A673 (cell line): ENCODE measurements at regions of chr12 and their contacts with region 1.

Region 1: DNA sequence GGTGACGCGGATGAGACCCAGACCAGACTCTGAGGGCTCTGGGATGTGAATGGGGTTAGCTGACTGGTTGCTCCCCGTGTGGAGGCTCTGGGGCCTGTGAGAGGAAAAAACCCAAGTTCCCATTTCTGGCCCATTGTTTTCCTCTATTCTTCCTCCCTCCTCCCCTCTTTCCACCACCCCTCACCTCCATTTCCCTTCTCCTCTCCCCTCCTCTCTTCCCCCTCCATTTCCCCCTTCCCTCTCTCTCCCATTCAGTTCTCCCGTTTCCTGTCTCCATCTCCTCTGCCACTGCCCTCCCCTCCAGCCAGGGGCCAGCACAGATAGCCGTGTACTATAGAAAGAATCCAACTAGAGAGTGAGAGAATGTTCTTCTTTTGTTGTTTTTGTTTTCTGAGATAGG is 12.6 kb upstream of the PRPH start:
- DNase-seq: no peak
- H3K4me3 ChIP-seq: no peak overlapping the region
- H3K27ac ChIP-seq: no peak overlapping the region
- H3K4me1 ChIP-seq: peaks cover 9% of the 10 kb centered on the region
- H3K27me3 ChIP-seq: no peaks in the 10 kb centered on the region
- CTCF ChIP-seq: no peak

Region 2: DNA sequence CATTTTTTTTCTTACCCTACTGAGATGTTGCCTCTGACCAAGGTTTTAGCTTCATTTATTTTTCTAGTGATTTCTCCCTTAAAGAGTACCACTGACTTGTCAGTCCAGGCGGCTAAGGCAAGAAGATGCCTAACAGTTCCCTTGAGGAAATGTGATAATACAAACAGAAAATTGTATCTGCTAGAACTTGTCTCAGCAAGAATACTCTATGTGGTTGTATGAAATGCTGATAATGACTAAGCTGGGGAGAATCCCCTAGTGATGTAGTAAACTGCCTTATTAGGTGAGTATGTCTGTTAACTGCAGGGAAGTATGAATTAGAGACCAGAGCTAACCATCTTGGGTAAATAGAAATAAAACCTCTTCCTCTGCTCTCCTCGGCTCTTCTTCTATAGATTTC is 793.3 kb before region 1 on chr12:
- CTCF ChIA-PET with region 1: no interaction called
- POLR2A ChIA-PET with region 1: no interaction called
- intact Hi-C with region 1: no loop called
- DNase-seq: no peak
- H3K4me3 ChIP-seq: no peak overlapping the region
- H3K27ac ChIP-seq: no peak overlapping the region
- H3K4me1 ChIP-seq: no peaks in the 10 kb centered on the region
- H3K27me3 ChIP-seq: peaks cover 15% of the 10 kb centered on the region
- CTCF ChIP-seq: no peak

Region 3: DNA sequence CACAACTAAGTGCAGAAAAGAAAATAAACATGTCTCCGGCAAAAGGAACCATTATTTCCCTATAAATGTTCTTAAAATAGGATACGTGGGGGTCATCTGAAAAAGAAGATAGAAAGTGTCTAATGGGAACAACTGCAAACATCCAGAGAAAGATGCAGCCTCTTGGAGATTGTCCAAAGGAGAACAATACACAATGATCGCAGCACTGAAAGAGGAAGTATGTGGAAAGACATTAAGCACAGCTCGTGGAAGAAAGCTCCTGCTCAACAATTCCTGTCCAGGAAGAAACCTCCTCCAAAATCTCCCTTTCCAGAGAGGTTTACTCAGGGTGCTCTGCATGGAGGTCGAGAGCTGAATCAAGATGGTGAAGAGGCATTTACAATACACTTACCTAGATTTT is 710.0 kb before region 1 on chr12:
- CTCF ChIA-PET with region 1: no interaction called
- POLR2A ChIA-PET with region 1: no interaction called
- intact Hi-C with region 1: no loop called
- DNase-seq: peak; percentile 11
- H3K4me3 ChIP-seq: no peak overlapping the region
- H3K27ac ChIP-seq: no peak overlapping the region
- H3K4me1 ChIP-seq: no peaks in the 10 kb centered on the region
- H3K27me3 ChIP-seq: peaks cover 6% of the 10 kb centered on the region
- CTCF ChIP-seq: no peak

Region 4: GRCh38 chr12:49534731-49535278 is 252.5 kb after region 1 on chr12:
- CTCF ChIA-PET with region 1: no interaction called
- POLR2A ChIA-PET with region 1: no interaction called
- intact Hi-C with region 1: no loop called
- DNase-seq: no peak
- H3K4me3 ChIP-seq: no peak overlapping the region
- H3K27ac ChIP-seq: no peak overlapping the region
- H3K4me1 ChIP-seq: peaks cover 11% of the 10 kb centered on the region
- H3K27me3 ChIP-seq: no peaks in the 10 kb centered on the region
- CTCF ChIP-seq: no peak

Region 5: GRCh38 chr12:49644620-49644994 is 362.3 kb after region 1 on chr12:
- CTCF ChIA-PET with region 1: no interaction called
- POLR2A ChIA-PET with region 1: no interaction called
- intact Hi-C with region 1: no loop called
- DNase-seq: peak; percentile 81
- H3K4me3 ChIP-seq: no peak overlapping the region
- H3K27ac ChIP-seq: no peak overlapping the region
- H3K4me1 ChIP-seq: peaks cover 9% of the 10 kb centered on the region
- H3K27me3 ChIP-seq: no peaks in the 10 kb centered on the region
- CTCF ChIP-seq: peak; percentile 91

Region 6: DNA sequence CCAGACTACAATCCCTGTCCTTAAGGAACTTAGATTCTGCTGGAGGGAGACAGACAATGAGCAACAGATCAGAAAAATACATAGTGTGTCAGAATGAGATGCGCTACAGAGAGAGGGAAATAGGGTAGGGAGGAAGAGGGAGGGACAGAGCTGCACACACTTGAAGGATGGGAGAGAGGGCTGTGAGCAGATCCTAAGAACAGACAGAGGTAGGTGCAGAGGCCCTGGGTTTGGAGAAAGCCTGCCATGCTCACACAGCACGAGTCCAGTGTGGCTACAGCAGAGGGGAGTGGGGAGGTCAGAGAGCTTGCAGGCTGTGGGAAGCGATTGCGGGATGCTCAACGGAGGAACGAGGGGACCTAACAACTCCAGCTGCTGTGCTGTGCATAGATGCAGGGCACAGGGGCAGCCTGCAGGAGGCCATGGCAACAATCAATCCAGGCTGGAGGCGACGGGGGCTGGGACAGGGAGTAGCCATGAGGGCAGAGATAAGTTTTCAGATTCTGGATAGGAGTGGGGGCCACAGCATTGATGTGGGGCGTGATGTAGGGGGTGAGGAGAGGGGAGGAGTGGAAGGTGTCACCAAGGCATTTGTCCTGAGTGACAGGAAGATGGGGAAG is 600.7 kb after region 1 on chr12:
- CTCF ChIA-PET with region 1: interaction called, 11 read pairs
- POLR2A ChIA-PET with region 1: no interaction called
- intact Hi-C with region 1: no loop called
- DNase-seq: no peak
- H3K4me3 ChIP-seq: no peak overlapping the region
- H3K27ac ChIP-seq: no peak overlapping the region
- H3K4me1 ChIP-seq: peaks cover 6% of the 10 kb centered on the region
- H3K27me3 ChIP-seq: no peaks in the 10 kb centered on the region
- CTCF ChIP-seq: no peak